Endothelial cell of umbilical vein (primary cell): ENCODE measurements at regions of chr3 and their contacts with region 1.

Region 1: GRCh38 chr3:24323272-24323671 is 171.4 kb downstream of the THRB start:
- DNase-seq: no peak
- H3K4me3 ChIP-seq: no peak overlapping the region
- H3K27ac ChIP-seq: no peak overlapping the region
- H3K4me1 ChIP-seq: no peaks in the 10 kb centered on the region
- H3K27me3 ChIP-seq: no peaks in the 10 kb centered on the region
- CTCF ChIP-seq: no peak
- POLR2A ChIP-seq: no peak

Region 2: GRCh38 chr3:23785097-23785645 is 538.1 kb before region 1 on chr3:
- CTCF ChIA-PET with region 1: no interaction called
- POLR2A ChIA-PET with region 1: no interaction called
- dilution Hi-C with region 1: no loop called
- intact Hi-C with region 1: no loop called
- DNase-seq: no peak
- H3K4me3 ChIP-seq: no peak overlapping the region
- H3K27ac ChIP-seq: no peak overlapping the region
- H3K4me1 ChIP-seq: no peaks in the 10 kb centered on the region
- H3K27me3 ChIP-seq: peaks cover 3 to 13% of the 10 kb centered on the region in 2 experiments
- CTCF ChIP-seq: no peak
- POLR2A ChIP-seq: no peak

Region 3: DNA sequence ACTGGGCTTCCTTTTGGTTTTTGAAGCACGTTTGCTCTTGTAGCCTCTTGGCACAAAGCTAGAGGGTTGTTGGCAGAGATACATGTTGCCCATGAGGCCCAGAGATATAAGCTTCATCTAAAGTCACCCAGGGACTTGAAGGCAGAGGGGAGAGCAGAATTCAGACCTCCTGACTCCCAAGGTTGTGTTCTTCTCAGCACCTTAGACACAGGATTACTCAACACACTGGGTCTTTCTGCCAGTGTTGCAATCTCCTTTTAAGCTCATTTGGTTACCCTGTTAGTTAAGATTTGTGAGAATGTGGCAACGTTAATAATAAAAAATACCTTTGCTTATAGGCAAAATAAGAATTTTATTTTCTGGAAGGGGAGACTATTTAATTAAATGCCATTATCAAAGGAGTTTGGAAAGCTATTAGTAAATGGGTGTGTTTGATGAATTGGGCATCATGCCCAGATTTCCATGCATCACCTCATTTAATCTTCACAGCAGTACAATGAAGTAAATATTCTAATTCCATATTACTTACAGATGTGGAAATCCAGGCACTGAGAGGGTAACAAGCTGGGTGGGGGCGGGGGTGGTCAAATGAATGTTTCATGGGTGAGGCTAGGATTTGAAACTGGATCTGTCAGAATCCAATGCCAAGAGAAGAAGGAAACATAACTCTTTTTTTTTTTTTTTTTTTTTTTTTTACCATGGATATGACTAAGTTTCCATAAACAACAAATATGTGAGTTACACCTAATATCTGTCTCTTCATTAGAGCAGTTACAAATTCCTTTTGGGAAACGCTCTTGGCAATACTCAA is 194.9 kb before region 1 on chr3:
- CTCF ChIA-PET with region 1: no interaction called
- POLR2A ChIA-PET with region 1: no interaction called
- dilution Hi-C with region 1: no loop called
- intact Hi-C with region 1: no loop called
- DNase-seq: no peak
- H3K4me3 ChIP-seq: no peak overlapping the region
- H3K27ac ChIP-seq: no peak overlapping the region
- H3K4me1 ChIP-seq: no peaks in the 10 kb centered on the region
- H3K27me3 ChIP-seq: no peaks in the 10 kb centered on the region
- CTCF ChIP-seq: no peak
- POLR2A ChIP-seq: no peak

Region 4: DNA sequence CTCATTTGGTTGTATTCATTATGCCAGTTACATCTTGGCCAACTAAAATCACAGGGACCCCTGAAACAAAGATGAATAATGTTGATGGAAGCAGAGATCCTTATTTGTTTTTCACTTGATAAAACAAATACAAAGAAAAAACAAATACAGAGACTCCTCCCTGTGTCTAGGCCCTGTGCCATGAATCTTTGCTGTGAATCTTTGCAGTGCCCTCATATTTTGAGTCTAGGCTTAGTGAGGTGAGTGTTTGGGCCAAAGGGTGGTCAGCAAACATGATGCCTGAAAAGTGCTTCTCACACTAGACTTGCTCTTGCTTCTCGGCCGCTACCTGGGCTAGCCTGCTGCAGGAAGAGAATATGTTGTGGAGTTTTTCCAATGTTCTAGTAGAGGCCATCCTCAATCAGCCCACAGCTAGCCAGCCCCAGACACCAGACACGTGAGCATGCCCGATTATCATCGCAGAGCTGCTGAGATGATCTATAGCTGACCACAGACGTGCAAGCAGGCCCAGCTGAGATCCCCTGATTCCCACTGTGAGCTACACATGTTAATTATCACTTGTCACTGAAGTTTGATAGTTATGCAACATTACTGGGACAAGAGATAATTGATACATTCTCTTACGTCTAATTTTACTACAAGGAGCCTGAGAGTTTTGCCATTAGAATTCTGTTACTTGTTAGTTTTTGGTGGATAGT is 20.1 kb before region 1 on chr3:
- CTCF ChIA-PET with region 1: no interaction called
- POLR2A ChIA-PET with region 1: no interaction called
- dilution Hi-C with region 1: no loop called
- intact Hi-C with region 1: loop called (anchors 1 kb)
- DNase-seq: no peak
- H3K4me3 ChIP-seq: no peak overlapping the region
- H3K27ac ChIP-seq: no peak overlapping the region
- H3K4me1 ChIP-seq: no peaks in the 10 kb centered on the region
- H3K27me3 ChIP-seq: no peaks in the 10 kb centered on the region
- CTCF ChIP-seq: no peak
- POLR2A ChIP-seq: no peak

Region 5: DNA sequence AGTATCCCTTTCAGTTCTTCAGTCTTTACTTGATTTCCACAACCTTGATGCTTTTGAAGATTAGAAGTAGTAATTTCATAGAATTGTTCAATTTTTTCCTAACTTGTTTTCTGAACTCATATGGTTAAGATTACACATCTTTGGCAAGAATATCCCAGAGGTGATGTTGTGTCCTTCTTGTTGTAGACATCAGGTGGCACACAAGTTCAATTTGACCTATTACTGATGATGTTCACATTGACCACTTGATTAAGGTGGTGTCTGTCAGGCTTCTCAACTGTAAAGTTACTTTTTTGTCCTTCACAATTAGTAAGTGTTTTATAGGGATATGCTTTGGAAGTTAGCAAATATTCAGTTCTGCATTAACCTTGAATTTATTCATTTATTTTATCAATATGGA is 205.9 kb after region 1 on chr3:
- CTCF ChIA-PET with region 1: no interaction called
- POLR2A ChIA-PET with region 1: no interaction called
- dilution Hi-C with region 1: no loop called
- intact Hi-C with region 1: loop called (anchors 1 kb)
- DNase-seq: no peak
- H3K4me3 ChIP-seq: no peak overlapping the region
- H3K27ac ChIP-seq: no peak overlapping the region
- H3K4me1 ChIP-seq: peaks cover 3% of the 10 kb centered on the region
- H3K27me3 ChIP-seq: no peaks in the 10 kb centered on the region
- CTCF ChIP-seq: no peak
- POLR2A ChIP-seq: no peak

Region 6: GRCh38 chr3:24548278-24548677 is 225.0 kb after region 1 on chr3:
- CTCF ChIA-PET with region 1: no interaction called
- POLR2A ChIA-PET with region 1: no interaction called
- dilution Hi-C with region 1: no loop called
- intact Hi-C with region 1: no loop called
- DNase-seq: no peak
- H3K4me3 ChIP-seq: no peak overlapping the region
- H3K27ac ChIP-seq: no peak overlapping the region
- H3K4me1 ChIP-seq: no peaks in the 10 kb centered on the region
- H3K27me3 ChIP-seq: no peaks in the 10 kb centered on the region
- CTCF ChIP-seq: no peak
- POLR2A ChIP-seq: no peak